Dorsolateral prefrontal cortex (tissue), 120 donors: ENCODE measurements at regions of chr6 and their contacts with region 1.

Region 1: GRCh38 chr6:107489636-107490565 is at the start of gene SOBP:
- DNase-seq: peak; percentile 48 to 86 (median 70)
- H3K4me3 ChIP-seq: peak within 1 kb of the TSS; percentile 65 to 96 (median 84)
- H3K27ac ChIP-seq: peak within 1 kb of the TSS; percentile 71 to 98 (median 93)
- H3K27me3 ChIP-seq: no peaks in the 10 kb centered on the region
- CTCF ChIP-seq: peak in 20 of 56 donors; percentile 8 to 48 (median 16)
- total RNA-seq, gene SOBP: 39.8 to 78.2 (median 56.6) TPM

Region 2: DNA sequence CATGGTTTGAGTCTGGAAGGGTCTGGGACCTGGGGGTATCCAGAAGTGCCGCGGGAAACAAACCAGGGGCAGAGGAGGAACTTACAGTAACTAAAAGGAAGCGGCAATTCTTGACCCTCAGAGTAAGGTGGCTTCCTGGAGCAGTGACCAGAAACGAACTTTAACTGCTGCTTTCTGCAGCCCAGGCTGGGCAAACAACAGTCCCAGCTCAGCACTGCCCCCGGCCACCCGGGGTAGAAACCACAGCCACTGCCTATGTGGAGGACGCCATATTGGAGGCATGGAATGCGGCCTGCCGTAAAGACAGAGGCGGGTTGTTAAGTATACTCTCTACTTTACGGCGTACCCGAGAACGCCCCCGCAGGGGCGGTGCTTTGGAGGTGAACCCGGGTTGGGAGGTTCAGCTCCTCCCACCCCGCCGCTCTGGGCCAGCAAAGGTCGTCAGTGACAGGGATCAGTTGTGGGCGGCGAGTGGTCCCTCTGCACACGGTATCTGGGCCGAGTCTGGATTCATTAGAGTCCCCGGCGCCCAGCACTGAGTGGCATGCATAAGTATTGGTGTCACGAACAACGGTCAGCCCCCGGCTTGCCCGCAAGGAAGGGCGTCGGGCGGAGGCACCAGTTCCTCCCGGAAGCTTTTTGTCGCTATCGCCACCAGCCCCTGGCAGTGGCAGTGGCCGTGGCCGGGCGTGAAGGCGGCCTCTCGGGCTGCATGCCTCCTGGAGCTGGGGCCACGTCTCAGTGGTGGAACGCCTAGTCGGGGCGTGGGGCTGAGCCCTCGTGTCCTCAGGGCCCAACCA is 30.4 kb before region 1 on chr6 and contains the start of gene PDSS2:
- intact Hi-C with region 1: loop called (anchors 1 to 2 kb)
- DNase-seq: peak; percentile 95 to 99 (median 98)
- H3K4me3 ChIP-seq: peak within 1 kb of the TSS; percentile 55 to 98 (median 88)
- H3K27ac ChIP-seq: peak within 1 kb of the TSS; percentile 40 to 98 (median 91)
- H3K27me3 ChIP-seq: no peaks in the 10 kb centered on the region
- CTCF ChIP-seq: peak in 54 of 56 donors; percentile 24 to 69 (median 48)
- total RNA-seq, gene PDSS2: 6.3 to 14.5 (median 9.7) TPM

Region 3: GRCh38 chr6:107550241-107550840 is 60.4 kb after region 1 on chr6:
- intact Hi-C with region 1: loop called (anchors 2 to 5 kb)
- DNase-seq: peak in 1 of 10 donors; percentile 14
- H3K4me3 ChIP-seq: peak overlapping the region in 9 of 59 donors; percentile 2 to 46 (median 12)
- H3K27ac ChIP-seq: peak overlapping the region in 57 of 59 donors; percentile 21 to 88 (median 73)
- H3K27me3 ChIP-seq: no peaks in the 10 kb centered on the region
- CTCF ChIP-seq: peak in 1 of 56 donors; percentile 16

Region 4: DNA sequence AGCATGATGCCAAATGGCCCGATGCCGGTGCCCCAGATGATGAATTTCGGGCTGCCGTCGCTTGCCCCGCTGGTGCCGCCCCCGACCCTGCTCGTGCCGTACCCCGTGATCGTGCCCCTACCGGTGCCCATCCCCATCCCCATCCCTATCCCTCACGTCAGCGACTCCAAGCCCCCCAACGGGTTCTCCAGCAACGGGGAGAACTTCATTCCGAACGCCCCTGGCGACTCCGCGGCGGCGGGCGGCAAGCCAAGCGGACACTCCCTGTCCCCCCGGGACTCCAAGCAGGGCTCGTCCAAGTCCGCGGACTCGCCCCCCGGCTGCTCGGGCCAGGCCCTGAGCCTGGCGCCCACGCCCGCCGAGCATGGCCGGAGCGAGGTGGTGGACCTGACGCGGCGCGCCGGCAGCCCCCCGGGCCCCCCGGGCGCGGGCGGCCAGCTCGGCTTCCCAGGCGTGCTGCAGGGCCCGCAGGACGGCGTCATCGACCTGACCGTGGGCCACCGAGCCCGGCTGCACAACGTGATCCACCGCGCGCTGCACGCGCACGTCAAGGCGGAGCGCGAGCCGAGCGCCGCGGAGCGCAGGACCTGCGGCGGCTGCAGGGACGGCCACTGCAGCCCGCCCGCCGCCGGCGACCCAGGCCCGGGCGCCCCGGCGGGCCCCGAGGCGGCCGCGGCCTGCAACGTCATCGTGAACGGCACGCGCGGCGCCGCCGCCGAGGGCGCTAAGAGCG is 144.6 kb after region 1 on chr6:
- intact Hi-C with region 1: loop called in 1 of 2 experiments (anchors 5 kb)
- DNase-seq: peak in 2 of 10 donors; percentile 20 to 28
- H3K4me3 ChIP-seq: peak overlapping the region in 49 of 59 donors; percentile 6 to 61 (median 44)
- H3K27ac ChIP-seq: peak overlapping the region in 37 of 59 donors; percentile 6 to 77 (median 62)
- H3K27me3 ChIP-seq: no peaks in the 10 kb centered on the region
- CTCF ChIP-seq: no peak